ENCODE measurements at regions of chr17 and their contacts with region 1.

Region 1: GRCh38 chr17:78544881-78545755 is 32.1 kb downstream of the DNAH17 start:
- DNase-seq: no peak
- ATAC-seq: no peak
- H3K4me3 ChIP-seq: no peak overlapping the region
- H3K27ac ChIP-seq: no peak overlapping the region
- H3K4me1 ChIP-seq: peaks cover 0 to 7% (median 0%) of the 10 kb centered on the region in 9 donors
- H3K27me3 ChIP-seq: no peaks in the 10 kb centered on the region
- CTCF ChIP-seq: no peak

Region 2: DNA sequence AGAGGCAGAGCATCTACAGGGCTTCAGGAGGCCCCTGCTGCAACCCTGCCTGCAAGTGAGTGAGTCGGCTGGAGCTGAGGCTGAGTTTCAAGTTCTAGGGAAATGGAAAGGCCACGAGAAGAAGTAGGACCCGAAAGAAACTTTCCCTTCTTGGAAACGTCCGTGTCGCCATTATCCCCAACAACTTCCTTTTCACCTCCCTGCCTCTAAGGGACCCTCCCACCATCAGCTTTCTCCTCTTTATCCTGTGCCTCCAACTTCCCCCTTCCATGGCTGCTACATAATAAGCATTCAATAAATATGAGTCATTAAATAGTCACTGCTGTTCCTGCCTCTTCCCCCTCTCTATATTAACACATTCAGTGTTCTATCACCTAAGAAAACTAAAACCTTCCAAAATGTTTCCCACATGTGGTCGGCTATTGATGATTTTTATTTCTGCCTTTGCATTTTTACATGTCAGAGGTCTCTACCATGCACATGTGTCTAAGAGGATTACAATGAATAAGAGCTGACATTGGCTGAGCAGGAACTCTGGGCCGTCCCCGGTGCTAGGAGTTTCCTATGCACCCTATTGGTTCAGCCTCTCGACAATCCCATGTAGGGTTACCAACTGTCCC is 702.5 kb before region 1 on chr17:
- intact Hi-C with region 1: loop called in 1 of 10 experiments (anchors 5 kb)
- DNase-seq: no peak
- ATAC-seq: no peak
- H3K4me3 ChIP-seq: no peak overlapping the region
- H3K27ac ChIP-seq: peak overlapping the region in 9 of 10 donors; percentile 35 to 88 (median 68)
- H3K4me1 ChIP-seq: peaks cover 4 to 56% (median 40%) of the 10 kb centered on the region in 9 donors
- H3K27me3 ChIP-seq: no peaks in the 10 kb centered on the region
- CTCF ChIP-seq: no peak

Region 3: GRCh38 chr17:78250891-78251794 is 294.0 kb before region 1 on chr17:
- intact Hi-C with region 1: no loop called
- DNase-seq: peak; percentile 82 to 87
- ATAC-seq: peak; percentile 63 to 82 (median 78)
- H3K4me3 ChIP-seq: peak overlapping the region in 1 of 10 donors; percentile 25
- H3K27ac ChIP-seq: peak overlapping the region in 1 of 10 donors; percentile 63
- H3K4me1 ChIP-seq: peaks cover 0 to 47% (median 21%) of the 10 kb centered on the region in 9 donors
- H3K27me3 ChIP-seq: no peaks in the 10 kb centered on the region
- CTCF ChIP-seq: peak; percentile 99 to 100 (median 100)

Region 4: DNA sequence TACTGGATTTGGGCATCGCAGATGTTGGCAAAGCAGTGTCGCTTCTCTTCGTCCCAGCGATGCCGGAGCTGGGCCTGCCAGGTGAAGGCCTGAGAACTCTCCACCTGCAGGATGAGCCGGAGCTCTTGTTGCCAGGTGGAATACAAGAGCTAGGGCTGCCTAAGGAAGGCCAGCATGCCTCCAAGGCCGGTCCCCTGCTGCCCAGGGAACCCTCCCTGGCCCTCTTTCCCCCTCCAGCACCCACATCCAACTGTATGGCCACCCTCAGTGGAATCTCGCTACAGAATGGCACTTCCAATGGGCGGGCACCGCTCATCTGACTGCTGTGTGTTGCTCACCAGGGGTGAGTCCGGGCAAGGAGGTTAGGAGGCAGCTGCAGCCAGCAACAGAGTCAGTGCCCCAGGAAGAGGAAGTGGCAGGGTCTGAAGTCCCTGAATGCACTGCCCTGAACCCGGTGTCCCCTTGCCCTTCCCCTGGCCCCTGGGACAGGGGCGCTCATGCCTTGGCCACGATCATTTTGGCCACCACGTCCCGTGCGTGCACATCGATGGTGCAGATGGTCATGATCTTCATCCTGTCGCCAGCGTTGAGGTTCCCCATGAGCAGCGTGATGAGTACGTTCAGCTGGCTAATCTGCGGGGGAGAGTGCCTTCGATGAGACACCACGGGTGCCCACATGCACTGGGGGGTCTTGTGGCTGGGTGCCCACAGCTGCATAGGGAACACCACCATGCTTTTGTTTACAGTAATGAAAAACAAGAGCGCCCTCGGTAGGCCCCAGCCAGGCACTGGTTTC is 43.7 kb before region 1 on chr17:
- intact Hi-C with region 1: no loop called
- DNase-seq: no peak
- ATAC-seq: no peak
- H3K4me3 ChIP-seq: no peak overlapping the region
- H3K27ac ChIP-seq: no peak overlapping the region
- H3K4me1 ChIP-seq: peaks cover 0 to 21% (median 5%) of the 10 kb centered on the region in 9 donors
- H3K27me3 ChIP-seq: no peaks in the 10 kb centered on the region
- CTCF ChIP-seq: no peak

Region 5: DNA sequence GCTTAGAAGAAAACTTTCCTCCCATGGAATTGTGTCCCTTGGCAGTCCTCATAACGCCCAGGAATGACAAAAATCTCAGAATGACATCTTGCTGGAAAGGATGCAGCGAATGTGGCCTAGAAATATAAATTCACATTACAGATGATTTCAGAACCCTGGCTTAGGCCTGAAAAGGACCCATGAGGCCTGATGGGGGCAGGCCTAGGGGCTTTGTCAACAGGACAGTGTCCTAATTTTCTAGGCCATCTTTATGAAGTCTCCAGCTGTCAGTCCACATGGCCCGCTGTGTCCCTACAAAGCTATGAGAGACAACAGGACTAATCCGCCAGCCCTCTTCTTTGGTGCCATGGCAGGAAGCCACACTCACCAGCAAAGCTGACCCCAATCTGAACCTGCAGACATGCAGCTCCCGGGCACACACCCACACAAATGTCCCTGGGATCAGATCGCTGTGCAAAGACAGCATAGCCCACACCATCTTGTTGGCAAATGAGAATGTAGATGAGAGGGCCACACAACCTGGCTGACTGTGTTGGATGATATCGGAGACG is 72.5 kb after region 1 on chr17:
- intact Hi-C with region 1: no loop called
- DNase-seq: no peak
- ATAC-seq: peak in 5 of 8 donors; percentile 27 to 59 (median 44)
- H3K4me3 ChIP-seq: no peak overlapping the region
- H3K27ac ChIP-seq: peak overlapping the region in 2 of 10 donors; percentile 30 to 32
- H3K4me1 ChIP-seq: peaks cover 0 to 13% (median 0%) of the 10 kb centered on the region in 9 donors
- H3K27me3 ChIP-seq: no peaks in the 10 kb centered on the region
- CTCF ChIP-seq: no peak

Region 6: DNA sequence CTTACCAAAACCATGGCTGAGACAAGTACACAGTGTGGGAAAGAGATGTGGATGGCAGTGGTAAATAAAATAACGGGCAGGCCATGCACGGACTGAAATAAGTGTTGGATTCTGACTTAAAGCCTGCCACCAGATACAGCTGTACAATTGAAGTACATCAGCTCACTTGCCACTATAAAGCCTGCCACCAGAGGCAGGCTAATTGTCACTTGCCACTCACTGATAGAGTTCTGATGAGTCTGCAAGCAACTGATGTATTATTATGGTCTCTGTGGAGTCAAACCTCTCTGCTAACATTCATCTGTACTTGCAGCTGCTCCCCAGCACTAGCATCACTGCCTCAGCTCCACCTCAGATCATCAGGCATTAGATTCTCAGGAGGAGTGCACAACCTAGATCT is 143.9 kb after region 1 on chr17:
- intact Hi-C with region 1: no loop called
- DNase-seq: no peak
- ATAC-seq: no peak
- H3K4me3 ChIP-seq: no peak overlapping the region
- H3K27ac ChIP-seq: no peak overlapping the region
- H3K4me1 ChIP-seq: peaks cover 0 to 4% (median 0%) of the 10 kb centered on the region in 9 donors
- H3K27me3 ChIP-seq: no peaks in the 10 kb centered on the region
- CTCF ChIP-seq: peak in 1 of 9 donors; percentile 18